GM10248 (cell line): ENCODE measurements at regions of chr17 and their contacts with region 1.

Region 1: GRCh38 chr17:29111816-29112499 is 68.2 kb downstream of the MYO18A start:
- DNase-seq: peak; percentile 76
- CTCF ChIP-seq: peak; percentile 92

Region 2: GRCh38 chr17:28929787-28930186 is 182.2 kb before region 1 on chr17:
- CTCF ChIA-PET with region 1: no interaction called
- POLR2A ChIA-PET with region 1: no interaction called
- DNase-seq: no peak
- CTCF ChIP-seq: no peak

Region 3: GRCh38 chr17:28973425-28973824 is 138.5 kb before region 1 on chr17:
- CTCF ChIA-PET with region 1: interaction called, 25 read pairs
- POLR2A ChIA-PET with region 1: no interaction called
- DNase-seq: no peak
- CTCF ChIP-seq: no peak

Region 4: GRCh38 chr17:29133146-29133713 is 21.3 kb after region 1 on chr17:
- CTCF ChIA-PET with region 1: interaction called, 89 read pairs
- POLR2A ChIA-PET with region 1: interaction called, 6 read pairs
- DNase-seq: no peak
- CTCF ChIP-seq: no peak